Caco-2 (cell line): ENCODE measurements at regions of chr7 and their contacts with region 1.

Region 1: GRCh38 chr7:140924019-140924820 is 509 bp downstream of the BRAF start:
- DNase-seq: peak; percentile 81 to 83
- H3K4me3 ChIP-seq: peak overlapping the region; percentile 71
- H3K4me3 Mint-ChIP-seq: no peak overlapping the region
- H3K27ac Mint-ChIP-seq: no peak overlapping the region
- H3K4me1 ChIP-seq: no peaks in the 10 kb centered on the region
- H3K4me1 Mint-ChIP-seq: no peaks in the 10 kb centered on the region
- H3K27me3 ChIP-seq: no peaks in the 10 kb centered on the region
- H3K27me3 Mint-ChIP-seq: no peaks in the 10 kb centered on the region
- CTCF ChIP-seq: peak; percentile 47 to 57

Region 2: DNA sequence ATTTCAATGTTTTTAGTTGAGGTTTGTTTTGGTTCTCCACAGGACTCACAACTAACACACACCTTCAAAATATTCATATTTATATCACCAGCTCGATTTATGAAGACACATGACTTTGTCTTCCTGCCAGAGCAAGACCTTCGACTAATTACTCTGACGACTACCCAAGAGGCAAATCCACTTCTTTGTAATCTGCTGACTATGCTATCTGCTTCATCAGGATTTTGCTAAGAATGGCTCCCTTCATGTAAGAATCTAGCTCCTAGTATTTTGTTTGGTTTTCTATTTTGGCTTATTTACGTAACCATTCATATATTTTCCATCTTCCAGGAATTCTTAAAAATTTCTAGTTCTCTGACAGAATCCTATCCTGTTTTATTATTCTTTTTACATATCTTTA is 92.5 kb before region 1 on chr7:
- CTCF ChIA-PET with region 1: interaction called, 3 read pairs
- POLR2A ChIA-PET with region 1: no interaction called
- intact Hi-C with region 1: loop called (anchors 5 kb)
- DNase-seq: no peak
- H3K4me3 ChIP-seq: no peak overlapping the region
- H3K4me3 Mint-ChIP-seq: no peak overlapping the region
- H3K27ac Mint-ChIP-seq: no peak overlapping the region
- H3K4me1 ChIP-seq: peaks cover 28% of the 10 kb centered on the region
- H3K4me1 Mint-ChIP-seq: peaks cover 22% of the 10 kb centered on the region
- H3K27me3 ChIP-seq: no peaks in the 10 kb centered on the region
- H3K27me3 Mint-ChIP-seq: no peaks in the 10 kb centered on the region
- CTCF ChIP-seq: no peak

Region 3: GRCh38 chr7:140876519-140877248 is 47.5 kb before region 1 on chr7:
- CTCF ChIA-PET with region 1: no interaction called
- POLR2A ChIA-PET with region 1: no interaction called
- intact Hi-C with region 1: no loop called
- DNase-seq: no peak
- H3K4me3 ChIP-seq: no peak overlapping the region
- H3K4me3 Mint-ChIP-seq: no peak overlapping the region
- H3K27ac Mint-ChIP-seq: no peak overlapping the region
- H3K4me1 ChIP-seq: no peaks in the 10 kb centered on the region
- H3K4me1 Mint-ChIP-seq: no peaks in the 10 kb centered on the region
- H3K27me3 ChIP-seq: no peaks in the 10 kb centered on the region
- H3K27me3 Mint-ChIP-seq: no peaks in the 10 kb centered on the region
- CTCF ChIP-seq: no peak

Region 4: GRCh38 chr7:140914083-140914482 is 10.1 kb before region 1 on chr7:
- CTCF ChIA-PET with region 1: interaction called, 6 read pairs
- POLR2A ChIA-PET with region 1: interaction called, 3 read pairs
- intact Hi-C with region 1: loop called (anchors 1 kb)
- DNase-seq: no peak
- H3K4me3 ChIP-seq: no peak overlapping the region
- H3K4me3 Mint-ChIP-seq: no peak overlapping the region
- H3K27ac Mint-ChIP-seq: no peak overlapping the region
- H3K4me1 ChIP-seq: peaks cover 27% of the 10 kb centered on the region
- H3K4me1 Mint-ChIP-seq: peaks cover 28% of the 10 kb centered on the region
- H3K27me3 ChIP-seq: no peaks in the 10 kb centered on the region
- H3K27me3 Mint-ChIP-seq: no peaks in the 10 kb centered on the region
- CTCF ChIP-seq: no peak

Region 5: GRCh38 chr7:140989068-140989467 is 64.8 kb after region 1 on chr7:
- CTCF ChIA-PET with region 1: no interaction called
- POLR2A ChIA-PET with region 1: no interaction called
- intact Hi-C with region 1: no loop called
- DNase-seq: peak; percentile 21 to 56
- H3K4me3 ChIP-seq: no peak overlapping the region
- H3K4me3 Mint-ChIP-seq: no peak overlapping the region
- H3K27ac Mint-ChIP-seq: no peak overlapping the region
- H3K4me1 ChIP-seq: peaks cover 32% of the 10 kb centered on the region
- H3K4me1 Mint-ChIP-seq: peaks cover 22% of the 10 kb centered on the region
- H3K27me3 ChIP-seq: no peaks in the 10 kb centered on the region
- H3K27me3 Mint-ChIP-seq: no peaks in the 10 kb centered on the region
- CTCF ChIP-seq: no peak